Mammary epithelial cell (primary cell): ENCODE measurements at regions of chr14 and their contacts with region 1.

Region 1: GRCh38 chr14:89760086-89760485 is 194.4 kb downstream of the EFCAB11 start:
- DNase-seq: no peak
- H3K4me3 ChIP-seq: no peak overlapping the region
- H3K27ac ChIP-seq: no peak overlapping the region
- H3K4me1 ChIP-seq: no peaks in the 10 kb centered on the region
- H3K27me3 ChIP-seq: no peaks in the 10 kb centered on the region
- CTCF ChIP-seq: no peak

Region 2: DNA sequence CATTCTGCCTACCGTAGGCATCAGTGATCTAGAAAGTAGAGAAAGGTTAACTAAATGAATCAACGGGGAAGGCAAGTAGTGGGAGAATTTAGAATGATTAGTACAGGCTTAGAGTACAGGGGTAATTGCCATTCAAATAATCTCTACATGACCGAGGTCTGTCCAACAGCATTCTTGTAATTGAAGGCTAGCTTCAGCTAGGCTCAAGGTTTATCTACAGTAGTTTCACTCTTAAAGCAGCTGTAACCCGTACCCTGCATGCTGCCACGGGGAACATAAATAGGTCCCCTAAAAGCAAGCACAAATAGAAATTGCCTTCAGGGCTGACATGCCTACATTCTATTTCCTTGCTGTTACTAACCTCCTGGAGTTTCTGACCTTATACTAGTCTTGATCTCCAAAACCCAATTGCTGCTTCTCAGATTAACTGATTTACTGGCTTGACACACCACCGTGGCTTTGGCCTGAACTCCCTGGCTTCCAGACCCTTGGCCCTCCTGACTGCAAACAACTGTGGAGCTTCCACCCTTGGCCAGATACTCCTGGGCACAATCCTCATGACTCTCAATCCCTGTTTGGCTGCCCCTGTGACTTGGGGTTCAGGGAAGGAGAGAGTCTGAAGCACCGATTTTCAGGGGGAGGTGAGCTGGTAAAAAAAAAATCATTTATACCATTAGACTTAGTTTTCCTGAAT is 101.0 kb before region 1 on chr14:
- CTCF ChIA-PET with region 1: no interaction called
- dilution Hi-C with region 1: no loop called
- in situ Hi-C with region 1: no loop called
- intact Hi-C with region 1: no loop called
- DNase-seq: no peak
- H3K4me3 ChIP-seq: no peak overlapping the region
- H3K27ac ChIP-seq: no peak overlapping the region
- H3K4me1 ChIP-seq: no peaks in the 10 kb centered on the region
- H3K27me3 ChIP-seq: no peaks in the 10 kb centered on the region
- CTCF ChIP-seq: no peak

Region 3: GRCh38 chr14:89669193-89669592 is 90.9 kb before region 1 on chr14:
- CTCF ChIA-PET with region 1: no interaction called
- dilution Hi-C with region 1: loop called (anchors 5 kb)
- in situ Hi-C with region 1: no loop called
- intact Hi-C with region 1: no loop called
- DNase-seq: no peak
- H3K4me3 ChIP-seq: no peak overlapping the region
- H3K27ac ChIP-seq: no peak overlapping the region
- H3K4me1 ChIP-seq: no peaks in the 10 kb centered on the region
- H3K27me3 ChIP-seq: no peaks in the 10 kb centered on the region
- CTCF ChIP-seq: no peak

Region 4: DNA sequence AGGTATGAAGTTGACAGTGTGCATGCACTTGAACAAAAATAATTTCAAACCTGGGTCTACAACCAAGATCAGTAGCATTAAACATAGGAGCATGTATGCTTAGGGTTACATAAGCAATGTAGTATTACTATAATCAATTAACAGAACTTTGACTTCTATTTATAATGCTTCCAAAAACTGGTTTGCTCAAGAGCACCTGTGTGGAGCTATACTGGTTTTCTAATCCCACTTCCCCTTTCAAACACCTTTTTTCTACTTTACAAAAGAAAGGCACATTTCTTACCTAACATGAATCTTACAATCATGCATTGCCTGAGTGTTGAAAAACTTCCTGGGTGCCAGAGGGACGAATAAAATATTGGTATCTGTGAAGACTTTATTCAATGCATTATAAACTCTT is 121.8 kb after region 1 on chr14:
- CTCF ChIA-PET with region 1: no interaction called
- dilution Hi-C with region 1: loop called (anchors 5 kb)
- in situ Hi-C with region 1: no loop called
- intact Hi-C with region 1: no loop called
- DNase-seq: no peak
- H3K4me3 ChIP-seq: no peak overlapping the region
- H3K27ac ChIP-seq: no peak overlapping the region
- H3K4me1 ChIP-seq: no peaks in the 10 kb centered on the region
- H3K27me3 ChIP-seq: no peaks in the 10 kb centered on the region
- CTCF ChIP-seq: no peak

Region 5: DNA sequence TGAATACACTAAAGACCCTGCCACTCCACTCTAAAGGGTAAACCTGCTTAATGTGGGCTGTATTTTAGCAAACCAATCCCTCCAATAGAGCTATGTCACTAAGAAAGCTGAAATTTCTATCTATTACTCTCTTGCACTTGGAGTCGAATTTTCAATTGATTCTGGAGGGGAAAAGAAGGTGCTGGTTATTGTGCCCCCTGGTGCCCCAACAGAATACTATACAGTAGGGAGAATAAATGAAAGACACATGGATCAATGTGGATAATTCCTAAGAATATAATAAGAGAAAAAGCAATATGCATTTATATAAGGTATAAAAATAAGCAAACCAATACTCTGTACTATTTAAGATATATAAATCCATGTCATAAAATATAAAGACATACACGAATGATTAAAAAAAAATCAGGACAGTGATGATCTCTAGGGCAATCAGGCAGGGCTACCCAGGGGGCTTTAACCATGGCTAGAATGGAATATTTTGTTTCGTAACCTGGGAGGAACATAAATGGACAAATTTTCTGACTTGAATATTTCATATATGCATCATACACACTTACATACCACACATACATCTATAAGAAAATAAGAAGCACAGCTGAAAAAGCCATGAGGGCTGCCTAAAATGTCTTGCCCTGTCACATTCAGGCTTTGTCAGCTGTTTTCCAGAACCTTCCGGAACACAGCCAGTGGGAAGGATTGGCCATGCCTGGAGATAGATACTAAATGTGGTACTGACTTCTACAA is 140.0 kb after region 1 on chr14:
- CTCF ChIA-PET with region 1: no interaction called
- dilution Hi-C with region 1: no loop called
- in situ Hi-C with region 1: no loop called
- intact Hi-C with region 1: no loop called
- DNase-seq: no peak
- H3K4me3 ChIP-seq: no peak overlapping the region
- H3K27ac ChIP-seq: no peak overlapping the region
- H3K4me1 ChIP-seq: no peaks in the 10 kb centered on the region
- H3K27me3 ChIP-seq: no peaks in the 10 kb centered on the region
- CTCF ChIP-seq: peak; percentile 46 to 61